HCT116 (cell line): ENCODE measurements at regions of chr1 and their contacts with region 1.

Region 1: GRCh38 chr1:206725109-206725963 is 40.6 kb downstream of the MAPKAPK2 start:
- DNase-seq: peak; percentile 15
- ATAC-seq: peak; percentile 70
- H3K4me3 ChIP-seq: no peak overlapping the region
- H3K27ac ChIP-seq: no peak overlapping the region
- H3K4me1 ChIP-seq: peaks cover 0 to 16% of the 10 kb centered on the region in 2 experiments; a peak in 1 of 4 replicates
- H3K27me3 ChIP-seq: no peaks in the 10 kb centered on the region
- CTCF ChIP-seq: peak in 2 of 3 experiments; percentile 67 to 76; a peak in 5 of 6 replicates
- POLR2A ChIP-seq: no peak
- RAD21 ChIP-seq: no peak

Region 2: GRCh38 chr1:206714331-206715058 is 10.8 kb before region 1 on chr1:
- CTCF ChIA-PET with region 1: interaction called, 12 read pairs
- POLR2A ChIA-PET with region 1: interaction called, 3 read pairs
- RAD21 ChIA-PET with region 1: no interaction called
- intact Hi-C with region 1: no loop called
- DNase-seq: no peak
- ATAC-seq: no peak
- H3K4me3 ChIP-seq: no peak overlapping the region
- H3K27ac ChIP-seq: no peak overlapping the region
- H3K4me1 ChIP-seq: peaks cover 6 to 21% of the 10 kb centered on the region in 2 experiments
- H3K27me3 ChIP-seq: no peaks in the 10 kb centered on the region
- CTCF ChIP-seq: no peak
- POLR2A ChIP-seq: no peak
- RAD21 ChIP-seq: no peak

Region 3: GRCh38 chr1:207077470-207078377 is 352.4 kb after region 1 on chr1:
- CTCF ChIA-PET with region 1: no interaction called
- POLR2A ChIA-PET with region 1: no interaction called
- RAD21 ChIA-PET with region 1: no interaction called
- intact Hi-C with region 1: loop called (anchors 5 kb)
- DNase-seq: peak; percentile 51
- ATAC-seq: peak; percentile 91
- H3K4me3 ChIP-seq: no peak overlapping the region
- H3K27ac ChIP-seq: no peak overlapping the region
- H3K4me1 ChIP-seq: no peaks in the 10 kb centered on the region
- H3K27me3 ChIP-seq: no peaks in the 10 kb centered on the region
- CTCF ChIP-seq: peak; percentile 82 to 87 (median 84); a peak in 5 of 6 replicates
- POLR2A ChIP-seq: no peak
- RAD21 ChIP-seq: peak; percentile 93

Region 4: GRCh38 chr1:207499573-207499972 is 774.2 kb after region 1 on chr1:
- CTCF ChIA-PET with region 1: no interaction called
- POLR2A ChIA-PET with region 1: no interaction called
- RAD21 ChIA-PET with region 1: no interaction called
- intact Hi-C with region 1: loop called (anchors 2 kb)
- DNase-seq: peak; percentile 59
- ATAC-seq: peak; percentile 98
- H3K4me3 ChIP-seq: no peak overlapping the region
- H3K27ac ChIP-seq: no peak overlapping the region
- H3K4me1 ChIP-seq: no peaks in the 10 kb centered on the region
- H3K27me3 ChIP-seq: peaks cover 5% of the 10 kb centered on the region; the same call in 1 of the 2 replicates
- CTCF ChIP-seq: peak; percentile 62 to 89 (median 81)
- POLR2A ChIP-seq: no peak
- RAD21 ChIP-seq: peak; percentile 97